CD14-positive monocyte (primary cell): ENCODE measurements at regions of chr14 and their contacts with region 1.

Region 1: GRCh38 chr14:106327234-106327633 is 800.9 kb downstream of the TMEM121 start:
- DNase-seq: no peak
- H3K4me3 ChIP-seq: no peak overlapping the region
- H3K4me3 Mint-ChIP-seq: no peak overlapping the region
- H3K27ac ChIP-seq: no peak overlapping the region
- H3K27ac Mint-ChIP-seq: no peak overlapping the region
- H3K4me1 ChIP-seq: no peaks in the 10 kb centered on the region
- H3K4me1 Mint-ChIP-seq: no peaks in the 10 kb centered on the region
- H3K27me3 ChIP-seq: no peaks in the 10 kb centered on the region
- H3K27me3 Mint-ChIP-seq: no peaks in the 10 kb centered on the region
- CTCF ChIP-seq: no peak

Region 2: GRCh38 chr14:106302661-106303060 is 24.6 kb before region 1 on chr14:
- intact Hi-C with region 1: no loop called
- DNase-seq: no peak
- H3K4me3 ChIP-seq: no peak overlapping the region
- H3K4me3 Mint-ChIP-seq: no peak overlapping the region
- H3K27ac ChIP-seq: no peak overlapping the region
- H3K27ac Mint-ChIP-seq: no peak overlapping the region
- H3K4me1 ChIP-seq: no peaks in the 10 kb centered on the region
- H3K4me1 Mint-ChIP-seq: peaks cover 11% of the 10 kb centered on the region
- H3K27me3 ChIP-seq: no peaks in the 10 kb centered on the region
- H3K27me3 Mint-ChIP-seq: peaks cover 0 to 2% (median 0%) of the 10 kb centered on the region in 3 donors
- CTCF ChIP-seq: no peak

Region 3: GRCh38 chr14:106347890-106348755 is 20.9 kb after region 1 on chr14:
- intact Hi-C with region 1: loop called in 1 of 2 experiments (anchors 1 kb)
- DNase-seq: no peak
- H3K4me3 ChIP-seq: no peak overlapping the region
- H3K4me3 Mint-ChIP-seq: no peak overlapping the region
- H3K27ac ChIP-seq: no peak overlapping the region
- H3K27ac Mint-ChIP-seq: no peak overlapping the region
- H3K4me1 ChIP-seq: peaks cover 0 to 4% of the 10 kb centered on the region in 2 donors
- H3K4me1 Mint-ChIP-seq: peaks cover 12% of the 10 kb centered on the region
- H3K27me3 ChIP-seq: no peaks in the 10 kb centered on the region
- H3K27me3 Mint-ChIP-seq: peaks cover 0 to 2% (median 0%) of the 10 kb centered on the region in 3 donors
- CTCF ChIP-seq: no peak

Region 4: DNA sequence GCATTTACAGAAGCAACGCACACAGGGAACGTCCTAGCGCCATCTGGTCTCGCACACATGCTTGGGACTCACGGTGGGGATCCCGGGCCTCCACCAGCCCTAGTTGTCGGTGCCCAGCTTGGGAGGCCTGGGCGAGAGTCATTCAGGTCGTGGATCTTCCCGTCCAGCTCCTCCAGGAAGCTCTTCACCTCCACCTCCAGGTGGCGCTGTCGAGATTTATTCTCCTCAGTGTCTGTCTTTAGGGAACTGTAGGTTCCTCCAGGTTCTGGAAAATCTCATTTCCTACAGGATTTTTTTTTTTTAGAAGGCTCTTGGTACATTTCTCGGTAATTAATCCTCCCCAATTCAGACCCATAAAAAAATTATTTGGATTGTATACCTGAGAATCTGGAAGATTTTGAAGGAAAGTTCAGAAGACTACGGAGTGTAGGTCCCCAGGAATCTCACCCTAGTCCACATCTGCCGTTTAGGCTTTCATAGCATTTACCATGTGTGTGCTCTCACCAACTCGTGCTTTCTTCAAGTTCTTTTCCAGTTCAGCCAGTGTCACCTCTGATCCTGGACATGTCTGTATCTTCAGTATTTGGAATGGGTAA is 109.2 kb after region 1 on chr14:
- intact Hi-C with region 1: no loop called
- DNase-seq: peak in 2 of 3 donors; percentile 15 to 57
- H3K4me3 ChIP-seq: no peak overlapping the region
- H3K4me3 Mint-ChIP-seq: no peak overlapping the region
- H3K27ac ChIP-seq: no peak overlapping the region
- H3K27ac Mint-ChIP-seq: no peak overlapping the region
- H3K4me1 ChIP-seq: no peaks in the 10 kb centered on the region
- H3K4me1 Mint-ChIP-seq: no peaks in the 10 kb centered on the region
- H3K27me3 ChIP-seq: no peaks in the 10 kb centered on the region
- H3K27me3 Mint-ChIP-seq: peaks cover 0 to under 1% (median 0%) of the 10 kb centered on the region in 3 donors
- CTCF ChIP-seq: peak; percentile 92

Region 5: DNA sequence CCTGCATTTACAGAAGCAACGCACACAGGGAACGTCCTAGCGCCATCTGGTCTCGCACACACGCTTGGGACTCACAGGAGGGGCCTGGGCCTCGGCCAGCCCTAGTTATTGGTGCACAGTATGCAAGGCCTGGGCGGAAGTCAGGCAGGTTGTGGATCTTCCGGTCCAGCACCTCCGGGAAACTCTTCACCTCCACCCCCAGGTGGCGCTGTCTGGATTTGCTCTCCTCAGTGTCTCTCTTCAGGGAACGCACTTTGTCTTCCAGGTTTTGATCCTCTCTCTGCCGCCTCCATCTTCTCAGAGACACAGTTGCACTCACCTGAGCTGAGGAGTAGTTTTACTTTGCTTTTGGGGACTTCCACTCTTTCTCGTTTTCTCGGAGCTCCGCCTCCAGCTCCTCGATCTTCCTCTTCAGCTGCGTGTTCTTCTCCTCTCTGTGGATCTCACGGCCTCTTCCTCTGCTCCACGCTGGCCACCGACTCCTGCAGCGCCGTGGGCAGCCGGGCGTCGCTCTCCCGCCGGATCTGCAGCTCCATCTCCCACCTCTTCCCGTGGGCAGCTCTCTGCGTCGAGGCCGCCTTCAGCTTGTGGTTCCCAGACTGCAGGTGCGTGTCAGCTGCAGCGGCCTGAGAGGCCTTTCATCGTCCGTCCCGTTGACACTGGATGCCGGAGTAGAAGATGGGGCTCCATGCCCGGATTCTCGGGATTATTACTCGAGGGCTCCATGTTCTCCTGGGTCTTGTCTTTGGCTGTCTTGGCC is 132.9 kb after region 1 on chr14:
- intact Hi-C with region 1: no loop called
- DNase-seq: no peak
- H3K4me3 ChIP-seq: no peak overlapping the region
- H3K4me3 Mint-ChIP-seq: no peak overlapping the region
- H3K27ac ChIP-seq: no peak overlapping the region
- H3K27ac Mint-ChIP-seq: peak overlapping the region in 1 of 7 donors; percentile 10
- H3K4me1 ChIP-seq: no peaks in the 10 kb centered on the region
- H3K4me1 Mint-ChIP-seq: no peaks in the 10 kb centered on the region
- H3K27me3 ChIP-seq: no peaks in the 10 kb centered on the region
- H3K27me3 Mint-ChIP-seq: no peaks in the 10 kb centered on the region
- CTCF ChIP-seq: peak; percentile 69